Activated CD4-positive, alpha-beta memory T cell treated with anti-CD3 and anti-CD28 coated beads for 36 hours (primary cell): ENCODE measurements at regions of chr6 and their contacts with region 1.

Region 1: GRCh38 chr6:127554435-127555006 is 22.5 kb upstream of the C6orf58 start:
- DNase-seq: peak; percentile 37
- H3K4me3 Mint-ChIP-seq: no peak overlapping the region
- H3K27ac Mint-ChIP-seq: no peak overlapping the region
- H3K4me1 Mint-ChIP-seq: no peaks in the 10 kb centered on the region
- H3K27me3 Mint-ChIP-seq: peaks cover 7% of the 10 kb centered on the region

Region 2: GRCh38 chr6:127641905-127642304 is 87.4 kb after region 1 on chr6:
- CTCF ChIA-PET with region 1: interaction called, 4 read pairs
- POLR2A ChIA-PET with region 1: no interaction called
- intact Hi-C with region 1: loop called (anchors 2 kb)
- DNase-seq: peak; percentile 16
- H3K4me3 Mint-ChIP-seq: no peak overlapping the region
- H3K27ac Mint-ChIP-seq: no peak overlapping the region
- H3K4me1 Mint-ChIP-seq: no peaks in the 10 kb centered on the region
- H3K27me3 Mint-ChIP-seq: no peaks in the 10 kb centered on the region

Region 3: GRCh38 chr6:128327890-128328289 is 773.4 kb after region 1 on chr6:
- CTCF ChIA-PET with region 1: interaction called, 3 read pairs
- POLR2A ChIA-PET with region 1: no interaction called
- intact Hi-C with region 1: loop called (anchors 10 kb)
- DNase-seq: peak; percentile 24
- H3K4me3 Mint-ChIP-seq: no peak overlapping the region
- H3K27ac Mint-ChIP-seq: no peak overlapping the region
- H3K4me1 Mint-ChIP-seq: no peaks in the 10 kb centered on the region
- H3K27me3 Mint-ChIP-seq: no peaks in the 10 kb centered on the region